ENCODE measurements at regions of chr9 and their contacts with region 1.

Region 1: DNA sequence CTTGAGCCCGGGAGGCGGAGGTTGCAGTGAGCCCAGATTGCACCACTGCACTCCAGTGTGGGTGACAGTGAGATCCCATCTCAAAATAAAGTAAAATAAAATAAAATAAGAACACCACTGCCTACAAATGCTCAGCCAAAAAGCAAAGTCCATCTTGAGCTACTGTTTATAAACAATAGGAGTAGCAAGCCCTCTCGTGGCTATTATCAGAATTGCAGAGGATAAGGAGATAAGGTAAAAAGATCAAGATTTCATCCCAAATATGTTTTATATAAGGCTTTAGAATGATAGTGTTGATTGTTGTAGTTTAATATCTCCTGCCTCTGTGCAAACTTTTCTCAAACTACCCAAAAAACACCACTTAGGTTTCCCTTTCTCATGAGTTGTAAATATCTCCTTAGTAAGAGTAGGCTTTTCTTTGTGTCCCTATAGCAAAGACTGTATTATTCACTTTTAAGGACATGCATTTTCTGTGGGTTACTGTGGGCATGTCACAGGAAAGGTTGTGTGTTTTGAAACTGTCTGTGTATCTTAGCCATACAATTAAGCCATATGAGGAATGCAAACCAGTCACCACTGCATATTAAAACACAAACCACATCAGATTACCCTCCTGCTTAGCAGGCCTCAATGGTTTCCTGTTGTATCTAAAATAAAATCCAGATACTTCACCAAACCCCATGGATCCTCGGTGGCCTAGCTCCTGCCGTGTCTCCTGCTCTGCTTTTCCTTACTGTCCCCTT is 31.8 kb upstream of the CKS2 start:
- DNase-seq: peak; percentile 55
- H3K4me3 ChIP-seq: no peak overlapping the region
- H3K27ac ChIP-seq: no peak overlapping the region
- H3K4me1 ChIP-seq: no peaks in the 10 kb centered on the region
- H3K27me3 ChIP-seq: no peaks in the 10 kb centered on the region
- CTCF ChIP-seq: peak; percentile 47 to 58
- POLR2A ChIP-seq: no peak

Region 2: DNA sequence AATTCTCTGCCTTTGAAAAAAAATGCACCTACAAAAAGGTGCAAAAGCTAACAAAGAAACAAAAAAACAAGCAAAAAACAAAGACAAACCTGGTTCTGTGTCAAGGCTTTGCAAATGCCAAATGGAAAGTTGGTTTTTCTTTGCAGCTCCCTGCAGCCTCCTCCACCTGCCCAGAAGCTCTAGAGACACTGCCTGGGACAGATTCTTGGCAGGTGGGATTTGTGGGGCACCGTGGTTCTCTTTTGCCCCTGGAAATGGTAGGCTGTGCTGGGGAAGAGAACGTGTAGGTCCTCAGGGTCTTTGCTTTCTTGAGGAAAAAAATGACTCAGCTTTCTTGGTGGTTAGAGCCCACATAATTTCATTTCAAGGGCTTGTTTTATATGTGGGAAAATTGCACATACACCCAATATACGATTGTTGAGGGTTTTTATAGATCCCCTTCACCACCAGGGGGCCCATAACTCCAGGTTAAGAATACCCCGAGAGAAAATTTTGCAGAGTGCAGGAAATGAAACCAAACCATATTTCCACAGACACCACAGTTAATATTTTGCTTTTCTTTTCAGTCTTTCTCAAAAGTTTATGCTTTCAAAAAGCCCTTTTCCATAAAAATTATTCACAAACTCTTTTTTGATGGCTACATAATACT is 685.5 kb before region 1 on chr9:
- CTCF ChIA-PET with region 1: interaction called, 24 read pairs
- POLR2A ChIA-PET with region 1: no interaction called
- dilution Hi-C with region 1: no loop called
- intact Hi-C with region 1: loop called (anchors 1 kb)
- DNase-seq: peak; percentile 39
- H3K4me3 ChIP-seq: no peak overlapping the region
- H3K27ac ChIP-seq: no peak overlapping the region
- H3K4me1 ChIP-seq: no peaks in the 10 kb centered on the region
- H3K27me3 ChIP-seq: peaks cover 0 to 5% of the 10 kb centered on the region in 2 experiments
- CTCF ChIP-seq: peak; percentile 51 to 57
- POLR2A ChIP-seq: no peak

Region 3: DNA sequence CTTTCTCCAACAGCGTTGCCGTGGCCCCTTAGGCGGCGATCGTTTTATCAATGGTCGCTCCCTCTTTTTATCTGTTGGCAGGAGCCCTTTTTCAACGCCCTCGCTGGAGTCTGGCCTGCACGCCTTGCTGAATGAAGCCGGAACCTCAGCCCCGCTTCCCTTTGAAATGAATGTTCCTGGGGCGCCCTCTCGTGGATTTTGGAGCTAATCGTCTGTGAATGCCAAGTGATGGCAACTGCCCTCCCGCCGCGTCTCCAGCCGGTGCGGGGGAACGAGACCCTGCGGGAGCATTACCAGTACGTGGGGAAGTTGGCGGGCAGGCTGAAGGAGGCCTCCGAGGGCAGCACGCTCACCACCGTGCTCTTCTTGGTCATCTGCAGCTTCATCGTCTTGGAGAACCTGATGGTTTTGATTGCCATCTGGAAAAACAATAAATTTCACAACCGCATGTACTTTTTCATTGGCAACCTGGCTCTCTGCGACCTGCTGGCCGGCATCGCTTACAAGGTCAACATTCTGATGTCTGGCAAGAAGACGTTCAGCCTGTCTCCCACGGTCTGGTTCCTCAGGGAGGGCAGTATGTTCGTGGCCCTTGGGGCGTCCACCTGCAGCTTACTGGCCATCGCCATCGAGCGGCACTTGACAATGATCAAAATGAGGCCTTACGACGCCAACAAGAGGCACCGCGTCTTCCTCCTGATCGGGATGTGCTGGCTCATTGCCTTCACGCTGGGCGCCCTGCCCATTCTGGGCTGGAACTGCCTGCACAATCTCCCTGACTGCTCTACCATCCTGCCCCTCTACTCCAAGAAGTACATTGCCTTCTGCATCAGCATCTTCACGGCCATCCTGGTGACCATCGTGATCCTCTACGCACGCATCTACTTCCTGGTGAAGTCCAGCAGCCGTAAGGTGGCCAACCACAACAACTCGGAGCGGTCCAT is 277.9 kb before region 1 on chr9:
- CTCF ChIA-PET with region 1: interaction called, 19 read pairs
- POLR2A ChIA-PET with region 1: no interaction called
- dilution Hi-C with region 1: no loop called
- intact Hi-C with region 1: loop called (anchors 2 kb)
- DNase-seq: peak; percentile 77
- H3K4me3 ChIP-seq: no peak overlapping the region
- H3K27ac ChIP-seq: no peak overlapping the region
- H3K4me1 ChIP-seq: no peaks in the 10 kb centered on the region
- H3K27me3 ChIP-seq: no peaks in the 10 kb centered on the region
- CTCF ChIP-seq: peak; percentile 59 to 71
- POLR2A ChIP-seq: no peak

Region 4: DNA sequence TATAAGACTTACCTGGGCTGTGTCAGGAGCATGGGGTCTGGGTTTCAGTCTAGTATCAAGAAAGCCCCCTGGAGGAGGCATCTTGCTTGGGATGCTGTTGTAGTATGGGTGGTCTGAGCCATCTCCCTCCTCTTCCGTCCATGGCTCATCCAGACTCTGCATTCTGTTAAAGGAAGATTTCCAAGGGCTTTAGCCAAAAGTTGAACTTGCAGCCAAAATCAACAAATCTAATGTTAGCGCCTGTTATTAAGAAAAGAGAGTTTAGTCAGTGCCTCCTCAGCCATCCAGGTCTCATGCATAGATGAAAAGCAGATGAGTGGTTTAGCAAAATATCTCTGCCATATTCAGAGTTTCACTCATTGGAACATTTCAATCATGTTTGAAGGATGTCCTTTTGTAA is 232.3 kb before region 1 on chr9:
- CTCF ChIA-PET with region 1: interaction called, 3 read pairs
- POLR2A ChIA-PET with region 1: no interaction called
- dilution Hi-C with region 1: no loop called
- intact Hi-C with region 1: loop called (anchors 10 kb)
- DNase-seq: no peak
- H3K4me3 ChIP-seq: no peak overlapping the region
- H3K27ac ChIP-seq: no peak overlapping the region
- H3K4me1 ChIP-seq: peaks cover 4% of the 10 kb centered on the region
- H3K27me3 ChIP-seq: no peaks in the 10 kb centered on the region
- CTCF ChIP-seq: no peak
- POLR2A ChIP-seq: no peak

Region 5: DNA sequence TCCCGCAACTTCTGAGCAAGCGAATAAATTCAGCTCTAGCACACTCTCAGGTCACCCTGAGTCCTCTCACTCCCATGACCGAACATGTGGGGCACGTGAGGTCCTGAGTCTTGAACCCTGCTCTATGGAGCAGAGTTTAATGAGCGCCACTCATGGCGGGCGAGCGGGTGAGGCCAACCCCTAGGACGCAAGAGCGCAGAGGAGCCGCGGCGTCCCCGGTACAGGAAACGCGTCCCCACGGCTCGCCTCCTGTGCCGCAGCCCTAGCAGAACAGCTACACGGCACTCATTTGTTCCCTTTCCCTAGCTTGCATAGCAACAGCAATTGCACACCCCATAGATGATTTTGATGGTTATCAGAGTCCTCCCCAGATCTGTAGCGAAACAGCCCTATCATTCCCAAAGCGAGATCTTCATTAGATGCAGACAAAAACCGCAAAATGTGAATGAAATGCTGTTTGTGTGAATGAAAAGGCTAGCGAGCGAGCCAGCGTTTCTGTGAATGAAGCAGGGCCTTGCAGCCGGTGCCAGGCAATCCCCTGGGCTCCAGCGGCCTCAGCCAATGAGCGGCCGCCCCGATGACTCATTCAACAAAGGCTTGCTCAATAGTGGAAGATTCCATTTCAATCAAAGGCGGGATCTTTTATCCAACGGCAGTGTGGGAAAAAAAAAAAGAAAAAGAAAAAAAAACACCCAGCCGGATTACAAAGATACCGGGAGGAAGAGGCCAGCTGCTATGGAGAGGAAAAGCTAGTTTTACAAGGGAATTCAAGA is 99.1 kb before region 1 on chr9:
- CTCF ChIA-PET with region 1: interaction called, 11 read pairs
- POLR2A ChIA-PET with region 1: no interaction called
- dilution Hi-C with region 1: no loop called
- intact Hi-C with region 1: no loop called
- DNase-seq: peak; percentile 97
- H3K4me3 ChIP-seq: peak overlapping the region; percentile 2 to 60 (median 34)
- H3K27ac ChIP-seq: peak overlapping the region; percentile 83
- H3K4me1 ChIP-seq: peaks cover 31% of the 10 kb centered on the region
- H3K27me3 ChIP-seq: peaks cover 13 to 20% of the 10 kb centered on the region in 2 experiments
- CTCF ChIP-seq: no peak
- POLR2A ChIP-seq: peak; percentile 85

Region 6: GRCh38 chr9:89243296-89244061 is 35.7 kb before region 1 on chr9:
- CTCF ChIA-PET with region 1: no interaction called
- POLR2A ChIA-PET with region 1: no interaction called
- dilution Hi-C with region 1: no loop called
- intact Hi-C with region 1: no loop called
- DNase-seq: no peak
- H3K4me3 ChIP-seq: no peak overlapping the region
- H3K27ac ChIP-seq: no peak overlapping the region
- H3K4me1 ChIP-seq: no peaks in the 10 kb centered on the region
- H3K27me3 ChIP-seq: no peaks in the 10 kb centered on the region
- CTCF ChIP-seq: no peak
- POLR2A ChIP-seq: no peak